ENCODE measurements at regions of chr10 and their contacts with region 1.

Region 1: GRCh38 chr10:73874267-73875138 is at the start of gene CAMK2G:
- DNase-seq: peak; percentile 55 to 93 (median 81)
- ATAC-seq: peak; percentile 72
- H3K4me3 ChIP-seq: peak within 1 kb of the TSS; percentile 93 to 95
- H3K4me3 Mint-ChIP-seq: peak within 1 kb of the TSS; percentile 87
- H3K27ac ChIP-seq: peak within 1 kb of the TSS; percentile 57 to 82
- H3K27ac Mint-ChIP-seq: peak within 1 kb of the TSS; percentile 90
- H3K4me1 ChIP-seq: peaks cover 60% of the 10 kb centered on the region
- H3K4me1 Mint-ChIP-seq: peaks cover 75% of the 10 kb centered on the region
- H3K27me3 ChIP-seq: no peaks in the 10 kb centered on the region
- H3K27me3 Mint-ChIP-seq: no peaks in the 10 kb centered on the region
- CTCF ChIP-seq: no peak
- total RNA-seq, gene CAMK2G: 28.4 to 28.9 TPM

Region 2: GRCh38 chr10:73810735-73811465 is 63.6 kb before region 1 on chr10:
- CTCF ChIA-PET with region 1: interaction called, 12 read pairs
- POLR2A ChIA-PET with region 1: interaction called, 4 read pairs
- intact Hi-C with region 1: loop called (anchors 1 kb)
- DNase-seq: peak; percentile 19 to 79 (median 66)
- ATAC-seq: peak; percentile 12
- H3K4me3 ChIP-seq: peak overlapping the region; percentile 56 to 87
- H3K4me3 Mint-ChIP-seq: peak overlapping the region; percentile 89
- H3K27ac ChIP-seq: peak overlapping the region; percentile 71 to 91
- H3K27ac Mint-ChIP-seq: peak overlapping the region; percentile 95
- H3K4me1 ChIP-seq: peaks cover 48% of the 10 kb centered on the region
- H3K4me1 Mint-ChIP-seq: peaks cover 44% of the 10 kb centered on the region
- H3K27me3 ChIP-seq: no peaks in the 10 kb centered on the region
- H3K27me3 Mint-ChIP-seq: no peaks in the 10 kb centered on the region
- CTCF ChIP-seq: no peak

Region 3: DNA sequence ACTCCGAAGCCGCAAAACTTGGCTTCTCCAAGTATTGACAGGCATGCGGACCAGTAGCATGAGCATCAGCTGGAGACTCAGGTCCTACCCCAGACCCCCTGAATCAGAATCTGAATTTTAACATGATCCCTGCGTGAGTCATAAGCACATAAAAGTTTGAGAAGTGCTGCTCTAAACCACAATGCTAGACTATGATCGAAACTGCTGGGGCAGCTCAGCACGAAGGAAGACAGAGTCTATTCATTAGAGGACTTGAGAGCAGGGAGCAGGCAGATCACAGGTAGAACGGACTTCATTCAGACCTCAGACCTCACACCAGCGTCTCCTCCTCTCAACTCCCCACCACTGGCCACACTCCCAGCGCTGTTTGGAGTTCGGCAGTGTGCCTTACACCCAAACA is 17.1 kb before region 1 on chr10:
- CTCF ChIA-PET with region 1: interaction called, 528 read pairs
- POLR2A ChIA-PET with region 1: interaction called, 19 read pairs
- intact Hi-C with region 1: loop called in 1 of 2 experiments (anchors 2 kb)
- DNase-seq: peak in 4 of 9 experiments; percentile 31 to 60 (median 48)
- ATAC-seq: peak; percentile 53
- H3K4me3 ChIP-seq: no peak overlapping the region
- H3K4me3 Mint-ChIP-seq: peak overlapping the region; percentile 50
- H3K27ac ChIP-seq: no peak overlapping the region
- H3K27ac Mint-ChIP-seq: peak overlapping the region; percentile 81
- H3K4me1 ChIP-seq: peaks cover 62% of the 10 kb centered on the region
- H3K4me1 Mint-ChIP-seq: peaks cover 60% of the 10 kb centered on the region
- H3K27me3 ChIP-seq: no peaks in the 10 kb centered on the region
- H3K27me3 Mint-ChIP-seq: no peaks in the 10 kb centered on the region
- CTCF ChIP-seq: no peak